ENCODE measurements at regions of chr9 and their contacts with region 1.

Region 1: GRCh38 chr9:105168870-105169319 is 75.6 kb upstream of the SLC44A1 start:
- DNase-seq: no peak
- ATAC-seq: no peak
- H3K4me3 ChIP-seq: no peak overlapping the region
- H3K27ac ChIP-seq: no peak overlapping the region
- H3K4me1 ChIP-seq: no peaks in the 10 kb centered on the region
- H3K27me3 ChIP-seq: no peaks in the 10 kb centered on the region
- CTCF ChIP-seq: no peak
- POLR2A ChIP-seq: no peak

Region 2: GRCh38 chr9:104868687-104869404 is 300.0 kb before region 1 on chr9:
- intact Hi-C with region 1: no loop called
- DNase-seq: peak; percentile 24 to 73 (median 47)
- ATAC-seq: peak; percentile 63
- H3K4me3 ChIP-seq: no peak overlapping the region
- H3K27ac ChIP-seq: peak overlapping the region in 2 of 4 donors; percentile 38 to 57
- H3K4me1 ChIP-seq: peaks cover 23% of the 10 kb centered on the region
- H3K27me3 ChIP-seq: no peaks in the 10 kb centered on the region
- CTCF ChIP-seq: no peak
- POLR2A ChIP-seq: no peak

Region 3: GRCh38 chr9:104911032-104911607 is 257.8 kb before region 1 on chr9:
- intact Hi-C with region 1: loop called (anchors 10 kb)
- DNase-seq: no peak
- ATAC-seq: no peak
- H3K4me3 ChIP-seq: no peak overlapping the region
- H3K27ac ChIP-seq: no peak overlapping the region
- H3K4me1 ChIP-seq: peaks cover 68% of the 10 kb centered on the region
- H3K27me3 ChIP-seq: no peaks in the 10 kb centered on the region
- CTCF ChIP-seq: no peak
- POLR2A ChIP-seq: no peak

Region 4: GRCh38 chr9:105405514-105406131 is 236.7 kb after region 1 on chr9:
- intact Hi-C with region 1: loop called (anchors 10 kb)
- DNase-seq: no peak
- ATAC-seq: no peak
- H3K4me3 ChIP-seq: no peak overlapping the region
- H3K27ac ChIP-seq: no peak overlapping the region
- H3K4me1 ChIP-seq: no peaks in the 10 kb centered on the region
- H3K27me3 ChIP-seq: no peaks in the 10 kb centered on the region
- CTCF ChIP-seq: no peak
- POLR2A ChIP-seq: no peak

Region 5: GRCh38 chr9:105500108-105500766 is 331.3 kb after region 1 on chr9:
- intact Hi-C with region 1: no loop called
- DNase-seq: no peak
- ATAC-seq: peak; percentile 89
- H3K4me3 ChIP-seq: no peak overlapping the region
- H3K27ac ChIP-seq: peak overlapping the region in 2 of 4 donors; percentile 69 to 75
- H3K4me1 ChIP-seq: no peaks in the 10 kb centered on the region
- H3K27me3 ChIP-seq: no peaks in the 10 kb centered on the region
- CTCF ChIP-seq: no peak
- POLR2A ChIP-seq: peak in 2 of 3 donors; percentile 27 to 51